OCI-LY7 (cell line): ENCODE measurements at regions of chr19 and their contacts with region 1.

Region 1: GRCh38 chr19:9796113-9796773 is 22.6 kb downstream of the FBXL12 start:
- DNase-seq: peak; percentile 93
- H3K4me3 ChIP-seq: no peak overlapping the region
- H3K27ac ChIP-seq: peak overlapping the region; percentile 18
- H3K4me1 ChIP-seq: peaks cover 11% of the 10 kb centered on the region
- CTCF ChIP-seq: peak; percentile 94

Region 2: DNA sequence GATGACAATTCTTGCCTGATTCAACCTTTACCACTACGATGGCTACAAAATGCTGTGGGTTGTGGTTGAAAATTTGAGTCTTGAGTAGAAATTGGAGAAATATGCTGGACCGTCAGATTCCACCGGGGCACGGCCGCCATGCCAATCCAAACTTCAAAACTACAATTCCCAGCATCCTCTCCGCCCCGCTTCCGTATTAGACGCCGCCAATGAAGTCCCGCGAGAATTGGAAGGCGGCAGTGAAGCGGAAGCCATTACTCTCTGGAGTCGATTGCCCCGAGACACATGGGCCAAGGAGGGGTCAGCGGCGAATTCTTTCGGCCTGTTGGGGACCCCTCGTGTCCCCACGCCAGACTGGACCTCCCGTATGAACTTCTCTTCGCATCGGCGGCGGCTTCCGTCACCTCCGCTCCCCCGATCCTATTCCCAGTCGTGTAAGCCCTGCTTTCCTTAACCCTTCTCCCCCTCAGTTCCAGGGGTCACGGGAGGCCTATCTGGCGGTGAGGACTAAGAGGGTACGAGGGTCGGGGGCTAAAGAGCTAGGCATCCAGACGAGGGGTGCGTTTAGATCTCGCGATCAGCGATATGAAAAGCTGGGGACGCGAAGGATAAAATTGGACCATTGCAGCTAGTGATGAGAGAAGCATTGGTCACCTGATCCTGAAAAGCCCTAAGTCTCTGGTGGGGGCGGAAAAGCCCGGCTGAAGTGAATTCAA is 655.9 kb before region 1 on chr19 and contains the start of gene ZNF317:
- CTCF ChIA-PET with region 1: no interaction called
- POLR2A ChIA-PET with region 1: no interaction called
- intact Hi-C with region 1: loop called (anchors 1 kb)
- DNase-seq: peak; percentile 96
- H3K4me3 ChIP-seq: peak within 1 kb of the TSS; percentile 87
- H3K27ac ChIP-seq: peak within 1 kb of the TSS; percentile 37
- H3K4me1 ChIP-seq: peaks cover 11% of the 10 kb centered on the region
- CTCF ChIP-seq: no peak
- total RNA-seq, gene ZNF317: 19.9 and 26.5 TPM in 2 replicates

Region 3: DNA sequence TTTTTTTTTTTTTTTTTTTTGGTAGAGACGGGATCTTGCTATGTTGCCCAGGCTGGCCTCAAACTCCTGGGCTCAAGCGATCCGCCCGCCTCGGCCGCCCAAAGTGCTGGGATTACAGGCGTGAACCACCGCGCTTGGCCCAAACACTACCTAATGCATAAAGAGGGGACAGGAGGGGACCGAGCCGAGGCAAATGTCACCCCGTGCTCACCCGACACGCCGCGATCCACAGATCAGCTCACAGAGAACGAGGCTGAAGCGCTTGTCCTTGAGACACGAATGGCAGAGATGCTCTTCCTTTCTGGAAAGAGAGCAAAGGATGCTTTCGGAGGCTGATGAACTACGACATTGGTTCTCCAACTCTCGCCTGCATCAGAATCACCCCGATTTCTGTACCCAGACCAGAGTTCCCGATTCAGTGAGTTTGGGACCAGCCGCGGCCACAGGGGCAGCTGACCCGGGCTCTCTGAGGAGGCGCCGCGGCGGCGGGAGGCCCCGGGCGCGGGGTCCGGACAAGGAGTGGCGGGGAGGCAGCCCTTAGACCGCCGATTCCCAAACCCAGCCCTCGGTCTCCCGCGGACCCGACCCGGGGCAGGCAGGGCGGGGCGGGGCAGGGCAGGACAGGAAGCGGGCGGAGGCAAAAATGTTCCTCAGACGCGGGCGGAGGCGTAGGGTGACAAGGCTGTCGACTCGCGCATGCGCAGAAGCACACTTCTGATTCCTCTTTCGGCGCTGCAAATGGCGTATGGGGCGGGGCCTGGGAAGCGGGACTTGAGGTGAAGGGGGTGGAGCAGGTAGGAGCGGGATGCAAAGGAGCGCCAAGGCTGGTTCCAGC is 486.9 kb before region 1 on chr19 and contains the start of gene ZNF699:
- CTCF ChIA-PET with region 1: no interaction called
- POLR2A ChIA-PET with region 1: no interaction called
- intact Hi-C with region 1: loop called (anchors 10 kb)
- DNase-seq: peak; percentile 99
- H3K4me3 ChIP-seq: peak within 1 kb of the TSS; percentile 80
- H3K27ac ChIP-seq: peak within 1 kb of the TSS; percentile 69
- H3K4me1 ChIP-seq: peaks cover 12% of the 10 kb centered on the region
- CTCF ChIP-seq: no peak
- total RNA-seq, gene ZNF699: 8.2 and 9.7 TPM in 2 replicates

Region 4: GRCh38 chr19:9435279-9436268 is 360.7 kb before region 1 on chr19 and contains the start of gene ZNF266:
- CTCF ChIA-PET with region 1: no interaction called
- POLR2A ChIA-PET with region 1: interaction called, 4 read pairs
- intact Hi-C with region 1: loop called (anchors 10 kb)
- DNase-seq: peak; percentile 95
- H3K4me3 ChIP-seq: peak within 1 kb of the TSS; percentile 93
- H3K27ac ChIP-seq: peak within 1 kb of the TSS; percentile 63
- H3K4me1 ChIP-seq: peaks cover 24% of the 10 kb centered on the region
- CTCF ChIP-seq: peak; percentile 59
- total RNA-seq, gene ZNF266: 22.1 and 28.2 TPM in 2 replicates

Region 5: GRCh38 chr19:9584073-9584833 is 212.0 kb before region 1 on chr19 and contains the start of gene ZNF121:
- CTCF ChIA-PET with region 1: no interaction called
- POLR2A ChIA-PET with region 1: interaction called, 4 read pairs
- intact Hi-C with region 1: loop called (anchors 1 kb)
- DNase-seq: peak; percentile 90
- H3K4me3 ChIP-seq: peak within 1 kb of the TSS; percentile 100
- H3K27ac ChIP-seq: peak within 1 kb of the TSS; percentile 74
- H3K4me1 ChIP-seq: peaks cover 18% of the 10 kb centered on the region
- CTCF ChIP-seq: no peak
- total RNA-seq, gene ZNF121: 55.3 and 74.4 TPM in 2 replicates

Region 6: GRCh38 chr19:9641810-9642209 is 154.4 kb before region 1 on chr19:
- CTCF ChIA-PET with region 1: no interaction called
- POLR2A ChIA-PET with region 1: no interaction called
- intact Hi-C with region 1: no loop called
- DNase-seq: peak; percentile 16
- H3K4me3 ChIP-seq: no peak overlapping the region
- H3K27ac ChIP-seq: no peak overlapping the region
- H3K4me1 ChIP-seq: no peaks in the 10 kb centered on the region
- CTCF ChIP-seq: no peak

Region 7: GRCh38 chr19:9721861-9722260 is 74.4 kb before region 1 on chr19:
- CTCF ChIA-PET with region 1: no interaction called
- POLR2A ChIA-PET with region 1: no interaction called
- intact Hi-C with region 1: no loop called
- DNase-seq: no peak
- H3K4me3 ChIP-seq: no peak overlapping the region
- H3K27ac ChIP-seq: no peak overlapping the region
- H3K4me1 ChIP-seq: no peaks in the 10 kb centered on the region
- CTCF ChIP-seq: no peak

Region 8: DNA sequence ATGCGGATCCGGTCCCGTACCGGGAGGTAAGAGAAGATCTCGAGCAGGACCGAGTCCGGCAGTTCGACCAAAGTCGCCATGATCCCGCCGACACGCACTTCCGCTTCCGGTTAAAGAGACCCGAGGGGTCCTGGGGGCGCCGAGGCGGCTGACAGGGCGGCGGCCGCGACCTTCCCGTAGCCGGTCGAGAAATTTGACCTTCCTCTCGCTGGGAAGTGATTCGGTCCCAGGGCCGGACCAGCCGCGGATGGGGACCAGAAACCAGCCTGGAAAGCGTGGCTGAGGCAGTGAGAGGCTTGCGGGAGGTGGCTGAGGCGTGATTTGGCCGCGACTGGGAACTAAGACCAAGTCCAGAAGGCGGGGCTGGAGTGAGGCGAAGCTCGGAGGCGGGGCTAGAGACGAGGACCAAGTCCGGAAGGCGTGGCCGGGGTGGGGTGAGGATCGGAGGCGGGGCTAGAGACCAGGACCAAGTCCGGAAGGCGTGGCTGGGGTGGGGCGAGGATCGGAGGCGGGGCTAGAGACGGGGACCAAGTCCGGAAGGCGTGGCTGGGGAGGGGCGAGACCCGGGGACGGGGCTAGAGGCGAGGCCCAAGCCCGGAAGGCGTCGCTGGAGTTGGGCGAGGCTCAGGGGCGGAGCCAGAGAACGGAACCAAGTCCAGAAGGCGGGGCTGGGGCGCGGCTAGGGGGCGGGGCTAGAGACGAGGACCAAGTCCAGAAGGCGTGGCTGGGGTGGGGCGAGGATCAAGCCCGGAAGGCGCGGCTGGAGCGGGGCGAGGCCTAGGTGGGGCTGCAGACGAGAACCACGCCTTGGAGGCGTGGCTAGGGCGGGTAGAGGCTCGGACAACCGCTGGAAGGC is 22.7 kb after region 1 on chr19 and contains the start of gene FBXL12:
- CTCF ChIA-PET with region 1: no interaction called
- POLR2A ChIA-PET with region 1: no interaction called
- intact Hi-C with region 1: loop called (anchors 1 kb)
- DNase-seq: peak; percentile 99
- H3K4me3 ChIP-seq: peak within 1 kb of the TSS; percentile 95
- H3K27ac ChIP-seq: peak within 1 kb of the TSS; percentile 77
- H3K4me1 ChIP-seq: peaks cover 20% of the 10 kb centered on the region
- CTCF ChIP-seq: no peak
- total RNA-seq, gene FBXL12: 22.3 and 38.7 TPM in 2 replicates